GM12878 (cell line): ENCODE measurements at regions of chr9 and their contacts with region 1.

Region 1: GRCh38 chr9:84170521-84171141 is 169.9 kb downstream of the SLC28A3 start:
- DNase-seq: no peak
- ATAC-seq: no peak
- H3K4me3 ChIP-seq: no peak overlapping the region
- H3K27ac ChIP-seq: no peak overlapping the region
- H3K4me1 ChIP-seq: no peaks in the 10 kb centered on the region
- H3K27me3 ChIP-seq: no peaks in the 10 kb centered on the region; a peak in 1 of 4 replicates
- CTCF ChIP-seq: no peak
- EP300 ChIP-seq: no peak
- POLR2A ChIP-seq: no peak
- RAD21 ChIP-seq: no peak

Region 2: DNA sequence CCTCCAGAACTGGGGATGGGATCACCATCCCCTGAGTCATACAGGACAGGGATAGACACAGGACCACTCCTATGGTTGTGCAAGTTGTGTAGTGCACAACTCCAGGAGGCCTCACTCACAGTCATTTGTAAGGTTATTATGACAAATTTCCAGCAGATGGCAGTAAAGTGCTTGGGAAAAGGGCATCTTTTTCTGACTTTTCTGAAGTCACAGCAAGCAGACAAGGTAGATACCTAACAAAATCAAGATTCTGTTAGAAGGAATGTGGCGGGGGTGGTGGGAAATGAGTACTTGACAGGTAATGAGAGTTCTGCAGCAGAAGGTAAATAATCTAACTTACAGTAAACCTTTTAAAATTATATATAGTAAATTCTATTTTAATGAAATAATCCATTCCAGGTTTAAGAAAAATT is 232.7 kb before region 1 on chr9:
- CTCF ChIA-PET with region 1: interaction called, 13 read pairs
- POLR2A ChIA-PET with region 1: no interaction called
- RAD21 ChIA-PET with region 1: interaction called, 6 read pairs
- SMC1A ChIA-PET with region 1: interaction called, 9 read pairs
- in situ Hi-C with region 1: loop called (anchors 5 kb)
- intact Hi-C with region 1: loop called (anchors 1 kb)
- DNase-seq: no peak
- ATAC-seq: peak; percentile 88
- H3K4me3 ChIP-seq: no peak overlapping the region
- H3K27ac ChIP-seq: no peak overlapping the region
- H3K4me1 ChIP-seq: no peaks in the 10 kb centered on the region
- H3K27me3 ChIP-seq: no peaks in the 10 kb centered on the region
- CTCF ChIP-seq: peak; percentile 47 to 72 (median 65); a peak in 5 of 6 replicates
- EP300 ChIP-seq: no peak
- POLR2A ChIP-seq: no peak
- RAD21 ChIP-seq: peak; percentile 88

Region 3: GRCh38 chr9:84101964-84102632 is 68.5 kb before region 1 on chr9:
- CTCF ChIA-PET with region 1: no interaction called
- POLR2A ChIA-PET with region 1: no interaction called
- RAD21 ChIA-PET with region 1: no interaction called
- SMC1A ChIA-PET with region 1: no interaction called
- in situ Hi-C with region 1: no loop called
- intact Hi-C with region 1: no loop called
- DNase-seq: no peak
- ATAC-seq: no peak
- H3K4me3 ChIP-seq: no peak overlapping the region
- H3K27ac ChIP-seq: no peak overlapping the region
- H3K4me1 ChIP-seq: no peaks in the 10 kb centered on the region
- H3K27me3 ChIP-seq: no peaks in the 10 kb centered on the region
- CTCF ChIP-seq: no peak
- EP300 ChIP-seq: no peak
- POLR2A ChIP-seq: no peak
- RAD21 ChIP-seq: no peak

Region 4: DNA sequence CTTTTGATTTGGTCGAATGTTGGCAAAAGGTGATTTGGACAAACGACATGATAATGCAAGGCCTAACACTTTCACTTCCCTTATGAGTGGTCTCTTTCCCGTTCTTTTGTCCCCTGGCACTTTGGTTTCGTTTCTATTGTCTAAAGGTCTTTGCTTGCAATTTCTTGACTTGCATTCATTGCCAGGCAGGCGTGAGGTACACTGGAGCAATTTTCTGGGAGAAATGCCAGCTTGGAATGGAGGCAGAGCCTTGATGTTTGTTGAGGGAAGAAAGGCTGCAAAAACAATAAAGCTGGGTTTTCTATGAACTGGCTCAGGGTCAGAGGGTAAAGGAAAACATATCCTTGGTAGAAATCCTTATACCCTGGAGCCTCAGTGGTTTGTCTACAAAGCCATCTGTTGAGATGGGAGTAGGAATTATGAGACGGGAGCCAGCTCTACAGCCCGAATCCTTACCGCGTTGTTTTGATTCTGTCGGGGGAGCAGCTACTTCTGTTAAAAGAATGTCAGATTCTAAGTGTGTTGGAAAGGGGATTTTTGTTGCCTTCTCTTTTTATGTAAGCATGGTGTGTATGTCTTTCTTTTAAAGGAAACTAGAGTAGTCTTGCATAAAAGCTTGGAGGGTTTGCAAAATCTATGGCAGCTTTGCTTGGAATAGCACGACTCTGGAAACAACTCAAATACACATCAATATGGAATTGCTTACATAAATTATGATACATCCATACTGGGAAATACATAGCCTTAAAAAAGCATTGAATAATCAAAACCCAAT is 31.1 kb before region 1 on chr9:
- CTCF ChIA-PET with region 1: interaction called, 11 read pairs
- POLR2A ChIA-PET with region 1: no interaction called
- RAD21 ChIA-PET with region 1: no interaction called
- SMC1A ChIA-PET with region 1: no interaction called
- in situ Hi-C with region 1: no loop called
- intact Hi-C with region 1: no loop called
- DNase-seq: peak; percentile 30
- ATAC-seq: peak; percentile 76
- H3K4me3 ChIP-seq: no peak overlapping the region
- H3K27ac ChIP-seq: no peak overlapping the region
- H3K4me1 ChIP-seq: peaks cover 5% of the 10 kb centered on the region; the same call in 1 of the 2 replicates
- H3K27me3 ChIP-seq: no peaks in the 10 kb centered on the region; a peak in 2 of 4 replicates
- CTCF ChIP-seq: no peak
- EP300 ChIP-seq: no peak; a peak in 1 of 4 replicates
- POLR2A ChIP-seq: no peak
- RAD21 ChIP-seq: no peak

Region 5: DNA sequence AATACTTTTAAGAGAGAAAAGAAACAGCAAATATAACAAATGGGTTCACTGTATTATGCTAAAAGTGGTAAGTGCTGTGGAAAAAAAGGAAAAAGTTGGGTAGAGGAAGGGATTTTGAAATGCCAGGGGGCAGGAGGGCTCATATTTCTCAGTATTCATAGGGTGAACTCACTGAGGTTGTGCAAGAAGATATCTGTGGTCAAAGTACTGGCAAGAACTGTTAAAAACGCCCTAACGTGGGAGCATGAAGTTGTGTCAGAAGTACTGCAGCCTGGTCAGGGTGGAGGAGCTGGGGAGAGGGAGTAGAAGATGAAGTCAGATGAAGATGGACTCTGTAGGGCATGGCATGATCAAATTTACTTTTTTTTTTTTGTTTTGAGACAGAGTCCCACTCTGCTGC is 201.1 kb after region 1 on chr9:
- CTCF ChIA-PET with region 1: no interaction called
- POLR2A ChIA-PET with region 1: no interaction called
- RAD21 ChIA-PET with region 1: no interaction called
- SMC1A ChIA-PET with region 1: no interaction called
- in situ Hi-C with region 1: no loop called
- intact Hi-C with region 1: no loop called
- DNase-seq: no peak
- ATAC-seq: no peak
- H3K4me3 ChIP-seq: no peak overlapping the region
- H3K27ac ChIP-seq: no peak overlapping the region
- H3K4me1 ChIP-seq: no peaks in the 10 kb centered on the region
- H3K27me3 ChIP-seq: no peaks in the 10 kb centered on the region
- CTCF ChIP-seq: no peak
- EP300 ChIP-seq: no peak
- POLR2A ChIP-seq: no peak
- RAD21 ChIP-seq: no peak